ENCODE measurements at regions of chr12 and their contacts with region 1.

Region 1: GRCh38 chr12:89949457-89950195 is 241.0 kb upstream of the ATP2B1 start:
- DNase-seq: peak; percentile 39
- ATAC-seq: peak; percentile 81
- H3K4me3 ChIP-seq: no peak overlapping the region
- H3K27ac ChIP-seq: peak overlapping the region; percentile 82
- H3K4me1 ChIP-seq: peaks cover 28% of the 10 kb centered on the region
- H3K27me3 ChIP-seq: no peaks in the 10 kb centered on the region
- CTCF ChIP-seq: peak; percentile 10; the same call in 1 of the 2 replicates

Region 2: DNA sequence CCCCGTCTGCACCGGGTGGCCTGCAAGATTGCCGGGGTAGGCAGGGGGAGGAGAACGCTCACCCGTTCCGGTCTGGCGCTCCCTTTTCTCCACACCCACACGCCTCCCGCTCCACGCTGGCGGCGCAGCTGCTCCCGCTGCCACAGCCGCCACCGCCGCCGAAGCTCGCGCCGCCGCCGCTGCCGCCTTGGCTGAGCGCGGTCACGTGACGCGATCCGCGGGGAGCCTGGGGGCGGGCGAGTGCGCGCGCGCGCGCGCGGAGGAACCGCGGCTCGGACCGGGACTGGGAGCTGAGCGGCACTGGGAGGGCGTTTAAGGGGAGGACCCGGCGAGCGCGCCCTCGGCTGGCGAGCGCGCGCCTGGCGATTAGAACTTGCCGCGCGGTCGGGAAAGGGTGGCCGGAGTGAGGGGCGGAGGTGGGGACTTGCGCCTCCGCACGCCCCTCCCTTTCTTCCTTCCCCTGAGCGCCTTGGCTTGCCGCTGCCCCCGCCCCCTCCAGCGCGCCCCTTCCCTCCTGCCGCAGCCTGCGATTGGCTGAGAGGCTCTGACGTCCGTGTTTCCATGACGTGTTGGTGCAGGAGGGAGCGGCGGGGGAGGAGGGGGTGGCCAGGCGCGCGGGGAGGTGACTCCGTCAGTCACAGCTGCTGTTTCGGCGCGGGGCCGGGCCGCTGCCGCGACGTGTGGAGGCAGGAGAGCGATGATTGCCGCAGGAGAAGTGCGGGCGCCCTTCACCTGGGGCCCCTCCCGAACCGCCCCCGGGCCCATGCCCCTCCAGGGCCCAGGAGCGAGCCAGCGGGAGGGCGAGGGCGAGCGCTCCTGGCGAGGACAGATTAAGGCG is 240.2 kb before region 1 on chr12:
- CTCF ChIA-PET with region 1: no interaction called
- POLR2A ChIA-PET with region 1: no interaction called
- in situ Hi-C with region 1: no loop called
- intact Hi-C with region 1: loop called (anchors 5 kb)
- DNase-seq: peak; percentile 75
- ATAC-seq: peak; percentile 86
- H3K4me3 ChIP-seq: peak overlapping the region; percentile 78 to 88
- H3K27ac ChIP-seq: peak overlapping the region; percentile 79
- H3K4me1 ChIP-seq: peaks cover 15% of the 10 kb centered on the region
- H3K27me3 ChIP-seq: peaks cover 3% of the 10 kb centered on the region
- CTCF ChIP-seq: no peak

Region 3: DNA sequence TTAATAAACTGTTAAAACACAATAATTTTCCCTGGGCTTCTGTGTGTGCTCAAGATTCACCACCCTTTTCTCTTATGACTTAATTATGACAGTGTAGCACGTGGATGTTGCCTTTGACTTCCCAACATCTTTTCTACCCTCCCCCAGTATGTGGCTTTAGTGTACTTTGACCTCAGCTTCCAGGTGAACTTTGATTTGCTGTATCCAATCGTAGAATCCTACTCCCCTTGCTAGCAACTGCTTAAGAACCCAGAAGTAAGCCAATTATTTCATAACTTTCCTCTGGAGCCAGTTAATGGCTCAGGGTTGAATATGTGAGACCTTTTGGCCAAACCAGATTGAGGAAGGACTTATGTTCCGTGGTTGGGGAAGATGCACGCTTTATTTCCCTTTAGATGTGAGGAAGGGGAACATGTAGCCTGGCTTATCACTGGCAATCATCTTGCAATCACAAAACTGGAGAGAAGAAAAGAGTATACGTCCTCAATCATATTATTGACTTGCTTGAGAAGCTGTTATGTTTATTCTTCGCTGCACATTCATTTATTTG is 18.6 kb after region 1 on chr12:
- CTCF ChIA-PET with region 1: no interaction called
- POLR2A ChIA-PET with region 1: no interaction called
- in situ Hi-C with region 1: no loop called
- intact Hi-C with region 1: no loop called
- DNase-seq: no peak
- ATAC-seq: no peak
- H3K4me3 ChIP-seq: no peak overlapping the region
- H3K27ac ChIP-seq: no peak overlapping the region
- H3K4me1 ChIP-seq: no peaks in the 10 kb centered on the region
- H3K27me3 ChIP-seq: no peaks in the 10 kb centered on the region
- CTCF ChIP-seq: no peak

Region 4: DNA sequence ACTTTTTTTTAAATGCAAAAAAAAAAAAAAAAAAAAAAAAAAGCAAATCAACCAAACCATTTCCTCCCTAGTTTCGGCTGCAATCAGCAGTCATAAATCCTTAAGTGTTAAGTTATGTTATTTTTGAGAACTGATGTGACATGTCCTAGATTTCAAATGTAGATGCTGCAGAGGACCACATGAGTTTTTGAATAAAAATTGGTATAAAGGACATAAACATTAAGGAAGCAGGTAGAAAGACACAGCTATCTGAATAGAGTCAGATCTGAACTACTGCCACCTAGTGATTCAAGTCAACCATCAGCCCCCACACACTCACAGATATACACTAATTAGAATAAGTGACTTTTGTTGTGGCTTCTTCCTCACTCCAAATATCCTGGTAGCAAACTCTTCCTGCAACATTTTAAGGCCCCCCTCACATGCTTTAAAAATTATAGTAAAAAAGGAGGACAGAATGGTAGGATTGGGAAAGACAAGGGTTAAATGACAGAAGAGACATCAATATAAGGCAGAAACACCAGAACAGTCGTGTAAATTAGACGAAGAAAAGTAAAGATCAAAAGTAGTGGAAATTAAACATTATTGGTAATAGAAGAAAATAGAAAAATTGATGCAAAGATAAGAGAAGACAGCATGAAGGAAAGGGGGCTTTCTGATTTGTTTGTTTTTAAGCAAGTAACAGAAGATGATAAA is 153.5 kb after region 1 on chr12:
- CTCF ChIA-PET with region 1: interaction called, 10 read pairs
- POLR2A ChIA-PET with region 1: no interaction called
- in situ Hi-C with region 1: no loop called
- intact Hi-C with region 1: no loop called
- DNase-seq: no peak
- ATAC-seq: no peak
- H3K4me3 ChIP-seq: no peak overlapping the region
- H3K27ac ChIP-seq: no peak overlapping the region
- H3K4me1 ChIP-seq: no peaks in the 10 kb centered on the region
- H3K27me3 ChIP-seq: no peaks in the 10 kb centered on the region
- CTCF ChIP-seq: peak; percentile 49; the same call in 1 of the 2 replicates